ENCODE measurements at regions of chr5 and their contacts with region 1.

Region 1: GRCh38 chr5:102596113-102596512 is 97.3 kb upstream of the SLCO6A1 start:
- DNase-seq: no peak
- ATAC-seq: no peak

Region 2: GRCh38 chr5:102628441-102629175 is 32.5 kb after region 1 on chr5:
- intact Hi-C with region 1: loop called in 1 of 2 experiments (anchors 5 kb)
- DNase-seq: peak; percentile 20
- ATAC-seq: peak in 1 of 2 donors; percentile 69

Region 3: DNA sequence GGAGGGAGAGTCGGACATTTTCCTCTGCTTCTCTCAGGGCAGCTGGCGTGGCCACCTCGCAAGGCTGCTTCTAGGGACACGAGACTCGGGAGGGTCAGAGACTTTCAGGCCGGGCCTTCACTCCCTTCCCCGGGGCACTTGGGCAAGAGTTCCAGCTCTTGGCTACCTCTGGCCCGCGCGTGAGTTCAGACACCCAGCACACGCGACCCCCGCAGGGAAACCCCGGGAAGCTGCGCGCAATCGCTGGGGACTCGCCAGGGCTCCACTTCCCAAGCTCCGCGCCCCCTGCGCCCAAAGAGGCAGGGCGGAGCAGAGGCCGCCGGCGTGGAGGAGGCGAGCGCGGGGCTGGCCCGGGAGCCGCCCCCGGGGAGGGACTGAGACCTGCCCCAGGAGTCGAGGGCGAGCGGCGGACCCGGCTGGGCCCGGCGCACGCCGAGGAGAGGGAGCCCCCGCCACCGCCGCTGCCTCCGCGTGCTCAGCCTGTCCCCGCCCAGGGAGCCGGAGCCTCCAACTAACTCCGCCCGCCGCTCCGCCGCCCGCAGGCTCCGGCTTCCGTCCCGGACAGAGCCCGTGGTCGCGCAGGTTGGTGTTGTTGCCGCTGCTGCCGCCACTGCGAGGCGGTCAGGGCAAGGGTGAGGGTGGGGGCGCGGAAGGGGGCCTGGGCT is 158.8 kb after region 1 on chr5 and contains the start of gene PAM:
- intact Hi-C with region 1: loop called in 1 of 2 experiments (anchors 10 kb)
- DNase-seq: peak; percentile 86
- ATAC-seq: peak; percentile 95
- total RNA-seq, gene PAM: 2,389 to 3,652 TPM

Region 4: GRCh38 chr5:103041071-103041676 is 445.1 kb after region 1 on chr5:
- intact Hi-C with region 1: no loop called
- DNase-seq: no peak
- ATAC-seq: no peak

Measured in left cardiac atrium (tissue), 4 donors.